Panc1 (cell line): ENCODE measurements at regions of chr17 and their contacts with region 1.

Region 1: DNA sequence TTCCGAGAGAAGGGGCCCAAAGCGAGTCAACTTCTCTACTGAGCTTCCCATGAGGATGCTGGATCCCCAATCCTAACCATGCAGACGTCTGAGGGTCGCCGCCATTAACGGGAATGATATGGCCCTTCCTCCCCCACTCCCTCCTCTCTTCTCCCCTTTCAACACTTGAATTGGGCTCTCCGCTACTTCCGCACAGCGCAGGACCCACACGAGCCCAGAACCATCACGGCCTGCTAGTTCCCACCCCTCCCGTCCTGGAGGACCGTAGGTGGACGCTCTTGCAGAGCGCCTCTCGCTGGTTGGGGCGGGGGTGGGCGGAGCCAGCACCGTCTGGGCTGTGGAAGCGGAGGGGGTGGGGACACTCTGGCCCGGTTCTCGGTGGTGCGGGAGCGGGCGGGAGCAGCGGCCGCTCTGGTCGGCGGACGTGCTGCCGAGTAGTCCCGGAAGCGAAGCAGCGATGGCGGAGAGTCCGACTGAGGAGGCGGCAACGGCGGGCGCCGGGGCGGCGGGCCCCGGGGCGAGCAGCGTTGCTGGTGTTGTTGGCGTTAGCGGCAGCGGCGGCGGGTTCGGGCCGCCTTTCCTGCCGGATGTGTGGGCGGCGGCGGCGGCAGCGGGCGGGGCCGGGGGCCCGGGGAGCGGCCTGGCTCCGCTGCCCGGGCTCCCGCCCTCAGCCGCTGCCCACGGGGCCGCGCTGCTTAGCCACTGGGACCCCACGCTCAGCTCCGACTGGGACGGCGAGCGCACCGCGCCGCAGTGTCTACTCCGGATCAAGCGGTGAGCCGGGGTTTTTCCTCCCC is at the start of gene UBE2Z:
- DNase-seq: peak; percentile 91
- ATAC-seq: peak; percentile 95
- H3K4me3 ChIP-seq: peak within 1 kb of the TSS; percentile 62 to 86
- H3K27ac ChIP-seq: peak within 1 kb of the TSS; percentile 94
- H3K4me1 ChIP-seq: peaks cover 37% of the 10 kb centered on the region
- H3K27me3 ChIP-seq: no peaks in the 10 kb centered on the region
- CTCF ChIP-seq: no peak; the same call in 1 of the 2 replicates
- total RNA-seq, gene UBE2Z: 223 TPM

Region 2: DNA sequence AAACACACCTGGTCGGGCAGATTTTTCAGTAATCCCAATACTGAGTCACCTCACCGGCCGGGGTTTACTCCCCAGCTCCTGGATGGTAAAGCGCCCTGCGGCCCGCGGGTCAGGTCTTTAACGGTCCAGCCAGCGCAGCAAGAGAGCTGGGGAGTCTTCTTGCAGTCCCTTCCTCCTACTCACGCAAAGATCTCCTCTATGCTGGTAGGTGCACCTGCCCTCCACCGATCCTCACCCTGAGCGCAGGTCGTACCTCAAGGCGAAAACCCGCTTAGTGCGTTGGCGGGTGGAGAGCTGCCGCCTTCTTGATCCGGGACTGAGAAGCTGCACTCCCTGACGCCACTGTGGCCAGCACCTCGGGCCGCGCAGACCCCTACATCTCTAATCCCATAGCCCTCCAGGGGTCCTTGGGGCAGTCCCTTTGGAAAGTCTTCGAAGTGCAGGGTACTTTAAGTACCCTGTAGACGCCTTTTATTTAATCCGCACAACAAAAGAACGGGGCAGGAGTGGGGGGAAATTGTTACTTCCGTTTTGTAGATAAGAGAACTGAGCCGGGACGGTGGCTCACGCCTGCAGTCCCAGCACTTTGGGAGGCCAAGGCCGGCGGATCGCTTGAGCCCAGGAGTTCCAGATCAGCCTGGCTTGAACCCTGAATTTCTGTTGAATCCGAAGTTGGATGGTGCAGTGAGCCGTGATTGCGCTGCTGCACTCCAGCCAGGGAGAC is 169.3 kb before region 1 on chr17:
- CTCF ChIA-PET with region 1: no interaction called
- POLR2A ChIA-PET with region 1: no interaction called
- in situ Hi-C with region 1: loop called (anchors 10 kb)
- intact Hi-C with region 1: no loop called
- DNase-seq: no peak
- ATAC-seq: no peak
- H3K4me3 ChIP-seq: no peak overlapping the region
- H3K27ac ChIP-seq: no peak overlapping the region
- H3K4me1 ChIP-seq: no peaks in the 10 kb centered on the region
- H3K27me3 ChIP-seq: no peaks in the 10 kb centered on the region; the same call in 1 of the 2 replicates
- CTCF ChIP-seq: no peak

Region 3: DNA sequence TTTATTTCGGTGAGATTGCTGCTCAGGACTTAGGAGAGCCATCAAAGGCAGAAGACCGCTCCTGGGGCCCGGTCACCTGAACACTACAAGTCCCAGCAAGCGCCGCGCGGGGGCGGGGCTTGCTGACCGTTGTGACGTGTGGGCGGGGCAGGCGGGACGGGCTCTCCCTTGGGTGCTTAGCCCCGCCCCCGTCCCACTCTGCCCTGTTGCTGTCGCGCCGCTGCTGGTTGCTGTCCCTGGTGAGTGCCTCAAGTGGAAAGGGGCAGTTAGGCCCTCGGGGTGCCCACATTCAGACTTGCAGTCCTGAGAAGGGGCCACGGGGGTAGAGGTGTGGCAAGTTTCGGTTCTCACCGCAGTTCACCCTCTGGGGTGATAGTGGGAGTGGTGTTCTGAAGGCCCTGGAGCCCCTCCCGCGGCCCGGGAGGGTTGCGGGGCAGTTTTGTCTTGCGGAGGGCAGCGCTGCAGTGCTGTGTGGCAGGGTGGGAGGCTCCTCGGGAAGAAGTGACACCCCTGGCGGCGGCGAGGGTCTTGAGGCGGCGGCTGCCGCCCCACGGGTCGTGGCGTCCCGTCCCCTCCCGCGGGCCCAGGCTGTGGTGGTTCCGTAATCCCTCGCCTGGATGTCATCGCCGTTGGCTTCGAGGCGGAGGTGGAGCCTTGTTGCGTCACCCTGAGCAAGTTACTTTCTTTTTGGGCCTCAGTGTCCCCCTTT is 77.3 kb before region 1 on chr17 and contains the start of gene CALCOCO2:
- CTCF ChIA-PET with region 1: no interaction called
- POLR2A ChIA-PET with region 1: no interaction called
- in situ Hi-C with region 1: no loop called
- intact Hi-C with region 1: no loop called
- DNase-seq: peak; percentile 64
- ATAC-seq: peak; percentile 99
- H3K4me3 ChIP-seq: peak within 1 kb of the TSS; percentile 68 to 91
- H3K27ac ChIP-seq: peak within 1 kb of the TSS; percentile 92
- H3K4me1 ChIP-seq: peaks cover 18% of the 10 kb centered on the region
- H3K27me3 ChIP-seq: no peaks in the 10 kb centered on the region
- CTCF ChIP-seq: no peak
- total RNA-seq, gene CALCOCO2: 282 TPM

Region 4: GRCh38 chr17:48850792-48851323 is 57.4 kb before region 1 on chr17:
- CTCF ChIA-PET with region 1: no interaction called
- POLR2A ChIA-PET with region 1: interaction called, 13 read pairs
- in situ Hi-C with region 1: no loop called
- intact Hi-C with region 1: no loop called
- DNase-seq: no peak
- ATAC-seq: no peak
- H3K4me3 ChIP-seq: no peak overlapping the region
- H3K27ac ChIP-seq: no peak overlapping the region
- H3K4me1 ChIP-seq: no peaks in the 10 kb centered on the region
- H3K27me3 ChIP-seq: no peaks in the 10 kb centered on the region
- CTCF ChIP-seq: no peak

Region 5: DNA sequence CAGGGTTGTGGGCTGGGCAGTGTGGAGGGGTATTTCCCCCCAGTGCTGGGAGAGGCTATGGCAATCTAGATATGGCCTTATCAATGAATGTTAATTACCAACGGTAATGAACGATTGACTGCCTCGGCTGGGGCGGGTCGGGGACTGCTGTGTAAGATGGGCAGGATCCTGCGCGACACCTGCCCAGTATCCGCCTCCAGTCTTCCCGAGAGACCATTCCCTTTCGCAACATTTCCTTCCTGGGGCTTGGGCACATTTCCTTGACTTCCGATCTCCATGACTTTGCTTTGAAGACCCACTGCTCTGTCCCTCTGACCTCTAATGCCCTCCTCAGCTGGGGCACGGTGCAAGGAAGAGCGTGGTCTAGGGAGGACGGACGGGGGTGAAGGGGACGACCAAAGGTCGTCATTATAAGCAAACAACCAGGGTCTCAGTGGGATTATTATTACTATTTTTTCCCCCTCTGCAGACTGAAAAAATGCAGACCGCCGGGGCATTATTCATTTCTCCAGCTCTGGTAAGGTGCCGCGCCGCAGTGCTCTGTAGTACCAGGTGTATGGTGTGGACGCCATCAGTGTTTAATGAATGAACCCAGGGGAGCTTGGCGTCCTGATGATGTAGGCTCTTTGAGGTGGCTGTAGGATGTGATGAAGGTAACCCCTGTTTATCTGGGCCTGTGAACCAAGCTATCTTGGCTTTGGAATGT is 15.2 kb before region 1 on chr17:
- CTCF ChIA-PET with region 1: interaction called, 6 read pairs
- POLR2A ChIA-PET with region 1: interaction called, 14 read pairs
- in situ Hi-C with region 1: no loop called
- intact Hi-C with region 1: no loop called
- DNase-seq: no peak
- ATAC-seq: peak; percentile 0
- H3K4me3 ChIP-seq: peak overlapping the region; percentile 80 to 95
- H3K27ac ChIP-seq: peak overlapping the region; percentile 97
- H3K4me1 ChIP-seq: peaks cover 18% of the 10 kb centered on the region
- H3K27me3 ChIP-seq: no peaks in the 10 kb centered on the region
- CTCF ChIP-seq: no peak

Region 6: GRCh38 chr17:49249292-49249794 is 341.1 kb after region 1 on chr17:
- CTCF ChIA-PET with region 1: no interaction called
- POLR2A ChIA-PET with region 1: no interaction called
- in situ Hi-C with region 1: no loop called
- intact Hi-C with region 1: no loop called
- DNase-seq: no peak
- ATAC-seq: 0 out of 2 replicates have a peak, but pooled peaks have one; percentile 26
- H3K4me3 ChIP-seq: no peak overlapping the region
- H3K27ac ChIP-seq: no peak overlapping the region
- H3K4me1 ChIP-seq: no peaks in the 10 kb centered on the region
- H3K27me3 ChIP-seq: no peaks in the 10 kb centered on the region
- CTCF ChIP-seq: no peak